Adrenal gland (tissue), 19 donors: ENCODE measurements at regions of chr18 and their contacts with region 1.

Region 1: DNA sequence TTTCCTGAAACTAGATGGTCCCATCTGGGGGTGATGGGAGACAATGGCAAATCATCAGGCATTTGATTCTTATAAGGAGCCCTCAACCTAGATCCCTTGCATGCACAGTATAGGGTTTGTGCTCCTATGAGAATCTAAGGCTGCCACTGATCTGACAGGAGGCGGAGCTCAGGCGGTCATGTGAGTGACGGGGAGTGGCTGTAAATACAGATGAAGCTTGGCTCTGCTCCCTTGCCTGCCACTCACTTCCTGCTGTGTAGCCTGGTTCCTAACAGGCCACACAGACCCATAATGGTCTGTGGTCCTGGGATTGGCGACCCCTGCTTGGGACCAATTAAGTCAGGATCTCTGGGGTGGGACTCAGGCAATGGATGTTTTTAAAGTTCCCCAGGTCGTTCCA is 293.4 kb downstream of the ZNF521 start:
- DNase-seq: no peak
- H3K4me3 ChIP-seq: no peak overlapping the region
- H3K27ac ChIP-seq: no peak overlapping the region
- H3K4me1 ChIP-seq: no peaks in the 10 kb centered on the region
- H3K27me3 ChIP-seq: no peaks in the 10 kb centered on the region
- CTCF ChIP-seq: no peak
- POLR2A ChIP-seq: no peak

Region 2: DNA sequence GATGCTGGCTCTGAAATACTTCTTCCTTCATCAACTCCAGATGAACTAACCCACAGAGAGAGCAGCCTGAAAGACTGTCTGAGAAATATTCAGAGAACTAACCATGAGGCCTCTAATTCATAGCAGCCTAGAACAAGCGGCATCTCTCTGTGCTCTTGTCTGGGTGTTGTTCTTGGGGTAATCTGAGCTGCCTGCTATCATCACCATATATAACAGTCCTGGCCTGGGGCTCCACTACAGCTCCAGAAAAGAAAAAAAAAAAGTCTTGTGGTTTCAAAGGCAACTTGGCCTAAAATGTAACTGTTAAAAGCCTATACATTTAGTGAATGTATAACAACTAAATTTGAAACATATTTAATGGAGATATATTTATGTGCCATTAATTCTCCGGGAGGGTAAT is 303.9 kb before region 1 on chr18:
- intact Hi-C with region 1: no loop called
- DNase-seq: no peak
- H3K4me3 ChIP-seq: no peak overlapping the region
- H3K27ac ChIP-seq: no peak overlapping the region
- H3K4me1 ChIP-seq: no peaks in the 10 kb centered on the region
- H3K27me3 ChIP-seq: no peaks in the 10 kb centered on the region
- CTCF ChIP-seq: no peak
- POLR2A ChIP-seq: no peak

Region 3: DNA sequence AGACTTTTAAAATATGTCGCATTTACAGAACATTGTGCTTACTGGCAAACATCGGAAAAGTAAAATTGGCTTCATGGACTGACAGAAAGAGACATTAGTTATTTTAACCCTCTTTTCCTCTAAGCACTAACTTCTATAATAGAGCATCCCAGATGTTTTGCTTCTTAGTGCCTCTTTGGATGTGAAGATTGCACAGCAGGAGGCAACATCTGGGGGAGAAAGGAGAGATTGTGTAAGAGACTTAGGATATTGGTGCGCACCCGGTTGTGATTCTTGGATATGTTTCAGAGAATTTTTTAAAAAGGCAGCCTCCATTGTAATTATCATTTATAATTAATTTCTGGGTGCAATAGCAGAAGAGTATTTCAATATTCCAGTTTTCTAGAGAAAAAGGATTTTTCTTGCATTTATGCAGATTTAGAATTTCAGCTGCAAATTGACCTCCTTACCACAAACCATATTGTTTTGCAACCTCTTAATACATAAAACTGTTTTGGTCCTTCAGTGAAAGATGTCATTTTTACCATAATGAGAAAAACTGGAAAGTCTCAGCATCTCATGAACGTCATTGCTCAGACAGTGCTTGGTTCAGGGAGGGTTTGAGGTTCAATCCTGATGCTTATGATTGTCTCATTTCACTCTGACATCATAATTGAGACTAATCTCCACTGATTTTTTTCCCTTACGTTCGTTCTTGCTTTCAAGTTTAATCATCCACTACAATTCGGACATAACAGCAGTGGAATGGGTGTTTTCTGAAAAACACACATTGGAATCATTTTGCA is 110.8 kb before region 1 on chr18:
- intact Hi-C with region 1: no loop called
- DNase-seq: no peak
- H3K4me3 ChIP-seq: no peak overlapping the region
- H3K27ac ChIP-seq: no peak overlapping the region
- H3K4me1 ChIP-seq: no peaks in the 10 kb centered on the region
- H3K27me3 ChIP-seq: no peaks in the 10 kb centered on the region
- CTCF ChIP-seq: no peak
- POLR2A ChIP-seq: no peak

Region 4: GRCh38 chr18:25121442-25121841 is 62.9 kb after region 1 on chr18:
- intact Hi-C with region 1: no loop called
- DNase-seq: no peak
- H3K4me3 ChIP-seq: no peak overlapping the region
- H3K27ac ChIP-seq: no peak overlapping the region
- H3K4me1 ChIP-seq: peaks cover 0 to 13% of the 10 kb centered on the region in 2 donors
- H3K27me3 ChIP-seq: no peaks in the 10 kb centered on the region
- CTCF ChIP-seq: no peak
- POLR2A ChIP-seq: no peak

Region 5: GRCh38 chr18:25334588-25334987 is 276.1 kb after region 1 on chr18:
- intact Hi-C with region 1: no loop called
- DNase-seq: no peak
- H3K4me3 ChIP-seq: no peak overlapping the region
- H3K27ac ChIP-seq: no peak overlapping the region
- H3K4me1 ChIP-seq: peaks cover 12 to 22% of the 10 kb centered on the region in 2 donors
- H3K27me3 ChIP-seq: no peaks in the 10 kb centered on the region
- CTCF ChIP-seq: peak in 2 of 6 experiments; percentile 12 to 15
- POLR2A ChIP-seq: no peak

Region 6: DNA sequence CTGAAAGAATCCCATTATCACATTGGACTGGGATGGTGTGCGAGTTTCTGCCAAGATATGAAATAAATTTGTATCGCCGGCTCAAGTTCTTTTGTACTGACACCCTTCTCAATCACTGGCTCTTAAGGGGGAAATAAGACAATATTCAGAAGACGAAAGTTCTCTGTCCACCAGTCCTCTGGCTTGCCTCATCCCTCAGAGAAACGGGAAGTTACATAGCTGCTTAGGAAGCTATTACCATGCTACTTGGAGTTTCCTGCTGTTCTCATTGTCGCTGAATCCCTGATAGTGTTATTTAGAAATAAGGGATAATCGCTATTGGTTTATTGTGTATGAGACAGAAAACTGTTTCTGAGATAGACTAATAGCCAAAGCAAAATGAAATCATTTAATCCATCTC is 498.5 kb after region 1 on chr18:
- intact Hi-C with region 1: loop called in 1 of 2 experiments (anchors 10 kb)
- DNase-seq: no peak
- H3K4me3 ChIP-seq: no peak overlapping the region
- H3K27ac ChIP-seq: no peak overlapping the region
- H3K4me1 ChIP-seq: no peaks in the 10 kb centered on the region
- H3K27me3 ChIP-seq: no peaks in the 10 kb centered on the region
- CTCF ChIP-seq: no peak
- POLR2A ChIP-seq: no peak